WTC11 (cell line): ENCODE measurements at regions of chr3 and their contacts with region 1.

Region 1: GRCh38 chr3:39288300-39288808 is 8.5 kb upstream of the CX3CR1 start:
- DNase-seq: peak; percentile 94
- ATAC-seq: peak; percentile 98
- H3K4me3 Mint-ChIP-seq: no peak overlapping the region
- H3K27ac Mint-ChIP-seq: no peak overlapping the region
- H3K4me1 Mint-ChIP-seq: peaks cover 5% of the 10 kb centered on the region
- H3K27me3 Mint-ChIP-seq: no peaks in the 10 kb centered on the region
- CTCF ChIP-seq: peak; percentile 47; the same call in 1 of the 2 replicates

Region 2: GRCh38 chr3:39118079-39118478 is 170.3 kb before region 1 on chr3:
- CTCF ChIA-PET with region 1: interaction called, 260 read pairs
- POLR2A ChIA-PET with region 1: interaction called, 4 read pairs
- DNase-seq: no peak
- ATAC-seq: no peak
- H3K4me3 Mint-ChIP-seq: no peak overlapping the region
- H3K27ac Mint-ChIP-seq: no peak overlapping the region
- H3K4me1 Mint-ChIP-seq: no peaks in the 10 kb centered on the region
- H3K27me3 Mint-ChIP-seq: no peaks in the 10 kb centered on the region
- CTCF ChIP-seq: no peak

Region 3: GRCh38 chr3:39171860-39172259 is 116.5 kb before region 1 on chr3:
- CTCF ChIA-PET with region 1: interaction called, 12 read pairs
- POLR2A ChIA-PET with region 1: no interaction called
- DNase-seq: no peak
- ATAC-seq: no peak
- H3K4me3 Mint-ChIP-seq: no peak overlapping the region
- H3K27ac Mint-ChIP-seq: no peak overlapping the region
- H3K4me1 Mint-ChIP-seq: peaks cover 8% of the 10 kb centered on the region
- H3K27me3 Mint-ChIP-seq: peaks cover 14% of the 10 kb centered on the region
- CTCF ChIP-seq: no peak

Region 4: GRCh38 chr3:39208463-39209055 is 79.8 kb before region 1 on chr3:
- CTCF ChIA-PET with region 1: interaction called, 31 read pairs
- POLR2A ChIA-PET with region 1: no interaction called
- DNase-seq: peak; percentile 56
- ATAC-seq: peak; percentile 83
- H3K4me3 Mint-ChIP-seq: no peak overlapping the region
- H3K27ac Mint-ChIP-seq: no peak overlapping the region
- H3K4me1 Mint-ChIP-seq: peaks cover 37% of the 10 kb centered on the region
- H3K27me3 Mint-ChIP-seq: no peaks in the 10 kb centered on the region; the same call in 1 of the 2 replicates
- CTCF ChIP-seq: no peak

Region 5: GRCh38 chr3:39260957-39261356 is 27.4 kb before region 1 on chr3:
- CTCF ChIA-PET with region 1: interaction called, 25 read pairs
- POLR2A ChIA-PET with region 1: no interaction called
- DNase-seq: no peak
- ATAC-seq: peak; percentile 52
- H3K4me3 Mint-ChIP-seq: no peak overlapping the region
- H3K27ac Mint-ChIP-seq: no peak overlapping the region
- H3K4me1 Mint-ChIP-seq: peaks cover 6% of the 10 kb centered on the region; the same call in 1 of the 2 replicates
- H3K27me3 Mint-ChIP-seq: no peaks in the 10 kb centered on the region
- CTCF ChIP-seq: no peak

Region 6: GRCh38 chr3:39383045-39383880 is 94.9 kb after region 1 on chr3 and contains the start of gene SLC25A38:
- CTCF ChIA-PET with region 1: interaction called, 204 read pairs
- POLR2A ChIA-PET with region 1: interaction called, 5 read pairs
- DNase-seq: peak; percentile 76
- ATAC-seq: peak; percentile 76
- H3K4me3 Mint-ChIP-seq: peak within 1 kb of the TSS; percentile 97
- H3K27ac Mint-ChIP-seq: peak within 1 kb of the TSS; percentile 98
- H3K4me1 Mint-ChIP-seq: peaks cover 31% of the 10 kb centered on the region
- H3K27me3 Mint-ChIP-seq: no peaks in the 10 kb centered on the region
- CTCF ChIP-seq: no peak
- total RNA-seq, gene SLC25A38: 34.9 to 37.3 TPM (median 36.7 TPM) in 3 replicates